Heart right ventricle (tissue), 16 donors: ENCODE measurements at regions of chr18 and their contacts with region 1.

Region 1: DNA sequence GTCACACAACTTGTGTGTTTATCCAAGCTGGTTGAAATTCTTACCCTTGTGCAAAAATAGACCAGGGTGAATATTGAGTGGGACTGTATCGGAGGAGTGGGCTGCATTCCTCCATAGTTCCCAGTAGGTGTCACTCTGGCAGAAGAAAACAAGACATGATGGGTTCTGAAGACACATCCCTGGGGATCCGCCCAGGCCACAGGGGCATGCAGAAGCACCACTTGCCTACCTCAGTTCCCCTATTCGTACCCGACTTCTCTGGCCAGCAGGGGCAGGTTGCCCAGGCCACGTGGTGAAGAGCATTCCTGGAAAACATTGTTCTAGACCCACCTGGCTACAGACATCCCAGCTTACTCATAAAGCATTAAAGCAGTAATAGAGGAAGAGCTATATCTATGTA is 168.2 kb downstream of the FAM210A start:
- DNase-seq: peak; percentile 41 to 55
- ATAC-seq: peak; percentile 58 to 86 (median 78)
- H3K4me3 ChIP-seq: no peak overlapping the region
- H3K27ac ChIP-seq: peak overlapping the region in 4 of 10 donors; percentile 3 to 36 (median 30)
- H3K4me1 ChIP-seq: peaks cover 2 to 71% (median 30%) of the 10 kb centered on the region in 9 donors
- H3K27me3 ChIP-seq: no peaks in the 10 kb centered on the region
- CTCF ChIP-seq: peak in 8 of 9 donors; percentile 21 to 74 (median 65)

Region 2: GRCh38 chr18:13611601-13612195 is 53.6 kb after region 1 on chr18:
- intact Hi-C with region 1: loop called in 4 of 10 experiments (anchors 5 kb)
- DNase-seq: peak; percentile 64 to 77
- ATAC-seq: peak; percentile 67 to 90 (median 74)
- H3K4me3 ChIP-seq: peak overlapping the region in 9 of 10 donors; percentile 17 to 54 (median 44)
- H3K27ac ChIP-seq: peak overlapping the region; percentile 68 to 88 (median 84)
- H3K4me1 ChIP-seq: peaks cover 17 to 75% (median 55%) of the 10 kb centered on the region in 9 donors
- H3K27me3 ChIP-seq: no peaks in the 10 kb centered on the region
- CTCF ChIP-seq: no peak

Region 3: GRCh38 chr18:13680612-13681011 is 122.5 kb after region 1 on chr18:
- intact Hi-C with region 1: loop called in 1 of 10 experiments (anchors 5 kb)
- DNase-seq: peak in 1 of 2 donors; percentile 36
- ATAC-seq: peak in 6 of 8 donors; percentile 59 to 75 (median 64)
- H3K4me3 ChIP-seq: no peak overlapping the region
- H3K27ac ChIP-seq: peak overlapping the region in 5 of 10 donors; percentile 84 to 90 (median 85)
- H3K4me1 ChIP-seq: peaks cover 3 to 58% (median 27%) of the 10 kb centered on the region in 9 donors
- H3K27me3 ChIP-seq: no peaks in the 10 kb centered on the region
- CTCF ChIP-seq: peak; percentile 17 to 64 (median 48)

Region 4: DNA sequence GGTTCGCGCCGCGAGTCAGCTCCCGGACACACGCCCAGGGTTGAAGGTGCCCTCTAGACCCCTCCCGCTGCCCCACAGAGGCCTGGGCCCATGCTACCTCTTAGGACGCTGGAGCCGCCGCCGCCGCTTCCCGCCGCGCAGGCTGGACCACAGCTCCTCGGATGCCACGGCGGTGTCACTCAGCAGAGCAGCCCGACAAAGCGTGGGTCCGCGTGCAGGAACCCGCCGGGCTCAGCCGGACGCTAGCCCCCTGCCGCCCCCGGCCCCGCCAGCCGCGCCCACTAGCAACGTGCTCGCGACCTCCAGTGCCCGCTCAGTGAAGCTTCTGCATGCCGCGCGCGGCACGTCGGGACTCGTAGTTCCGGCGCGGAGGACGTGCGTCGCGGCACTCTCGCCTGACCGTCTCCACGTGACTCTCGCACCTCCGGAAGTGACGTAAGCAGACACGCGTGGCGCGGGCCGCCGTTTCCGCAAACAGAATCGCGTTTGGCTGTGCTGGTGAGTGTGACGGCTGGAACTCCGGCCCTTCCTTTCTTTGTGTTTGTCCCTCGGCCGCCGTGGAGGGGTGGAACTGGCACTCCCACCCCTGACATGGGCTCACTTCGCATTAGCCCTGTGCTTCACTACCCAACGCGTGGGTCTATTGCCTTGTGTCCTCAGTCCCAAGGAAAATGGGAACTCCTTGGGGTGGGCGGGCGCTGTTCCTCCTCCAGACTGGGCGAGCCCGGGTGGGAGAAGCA is 168.3 kb after region 1 on chr18 and contains the starts of genes FAM210A and RNMT:
- intact Hi-C with region 1: loop called in 7 of 10 experiments (anchors 5 to 10 kb)
- DNase-seq: peak; percentile 96
- ATAC-seq: peak; percentile 97 to 99 (median 98)
- H3K4me3 ChIP-seq: peak within 1 kb of the TSS; percentile 75 to 95 (median 85)
- H3K27ac ChIP-seq: peak within 1 kb of the TSS; percentile 81 to 97 (median 94)
- H3K4me1 ChIP-seq: peaks cover 0 to 49% (median 28%) of the 10 kb centered on the region in 9 donors
- H3K27me3 ChIP-seq: no peaks in the 10 kb centered on the region
- CTCF ChIP-seq: peak in 4 of 9 donors; percentile 12 to 57 (median 48)
- total RNA-seq, gene FAM210A: 41.6 to 84.8 (median 58.2) TPM
- total RNA-seq, gene RNMT: 21.1 to 37.0 (median 34.2) TPM

Region 5: DNA sequence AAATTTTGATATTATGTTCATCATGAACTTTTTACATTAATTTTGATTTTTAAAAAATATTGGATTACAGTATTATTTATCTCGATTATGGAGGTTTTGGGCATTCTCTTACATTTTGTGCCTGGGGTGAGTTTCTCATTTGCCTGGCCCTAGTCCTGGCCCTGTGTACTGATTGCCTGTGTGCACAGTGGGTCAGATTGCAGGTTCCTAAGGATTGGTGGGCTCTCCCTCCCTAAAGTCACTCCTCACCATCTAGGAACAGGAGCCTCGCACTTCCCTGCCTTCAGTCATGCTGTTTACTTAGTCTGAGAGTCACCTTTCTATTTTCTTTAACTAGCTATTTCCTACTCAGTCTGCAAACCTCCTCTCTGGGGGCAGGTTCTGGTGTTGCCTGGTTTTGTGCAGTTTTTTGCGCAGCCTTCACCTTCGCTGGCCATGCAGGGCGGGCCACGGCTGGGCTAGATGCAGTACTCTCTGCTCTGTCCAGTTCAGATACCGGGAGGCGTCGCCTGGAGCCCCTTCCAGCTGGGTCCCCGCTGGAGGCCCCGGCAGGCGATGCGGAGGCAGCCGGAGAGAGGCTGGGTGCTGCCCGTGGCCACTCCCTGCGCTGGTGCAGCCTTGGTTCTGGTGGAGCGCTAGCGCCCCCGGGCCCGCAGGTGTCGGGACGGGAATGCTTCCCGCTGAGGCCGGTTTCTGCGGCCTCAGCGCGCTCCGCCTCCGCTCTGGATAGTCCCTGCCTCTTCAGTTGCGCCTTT is 242.6 kb after region 1 on chr18:
- intact Hi-C with region 1: loop called in 2 of 10 experiments (anchors 10 kb)
- DNase-seq: peak; percentile 56 to 78
- ATAC-seq: peak; percentile 90 to 96 (median 92)
- H3K4me3 ChIP-seq: peak overlapping the region in 7 of 10 donors; percentile 17 to 41 (median 30)
- H3K27ac ChIP-seq: no peak overlapping the region
- H3K4me1 ChIP-seq: peaks cover 0 to 20% (median 4%) of the 10 kb centered on the region in 9 donors
- H3K27me3 ChIP-seq: peaks cover 0 to 45% (median 4%) of the 10 kb centered on the region in 7 donors
- CTCF ChIP-seq: peak; percentile 22 to 69 (median 56)